Activated CD4-positive, alpha-beta T cell treated with anti-CD3 and anti-CD28 coated beads for 36 hours (primary cell): ENCODE measurements at regions of chr10 and their contacts with region 1.

Region 1: GRCh38 chr10:30330497-30331168 is 18.4 kb downstream of the MTPAP start:
- DNase-seq: no peak
- ATAC-seq: no peak
- H3K4me3 Mint-ChIP-seq: no peak overlapping the region
- H3K27ac Mint-ChIP-seq: no peak overlapping the region
- H3K4me1 Mint-ChIP-seq: no peaks in the 10 kb centered on the region
- H3K27me3 Mint-ChIP-seq: no peaks in the 10 kb centered on the region

Region 2: GRCh38 chr10:30284865-30285594 is 45.6 kb before region 1 on chr10:
- CTCF ChIA-PET with region 1: no interaction called
- POLR2A ChIA-PET with region 1: no interaction called
- intact Hi-C with region 1: no loop called
- DNase-seq: peak; percentile 6
- ATAC-seq: peak; percentile 23
- H3K4me3 Mint-ChIP-seq: no peak overlapping the region
- H3K27ac Mint-ChIP-seq: no peak overlapping the region
- H3K4me1 Mint-ChIP-seq: no peaks in the 10 kb centered on the region
- H3K27me3 Mint-ChIP-seq: peaks cover 2% of the 10 kb centered on the region

Region 3: GRCh38 chr10:30309401-30309800 is 21.2 kb before region 1 on chr10:
- CTCF ChIA-PET with region 1: no interaction called
- POLR2A ChIA-PET with region 1: no interaction called
- intact Hi-C with region 1: loop called in 1 of 2 experiments (anchors 2 kb)
- DNase-seq: no peak
- ATAC-seq: no peak
- H3K4me3 Mint-ChIP-seq: no peak overlapping the region
- H3K27ac Mint-ChIP-seq: no peak overlapping the region
- H3K4me1 Mint-ChIP-seq: no peaks in the 10 kb centered on the region
- H3K27me3 Mint-ChIP-seq: no peaks in the 10 kb centered on the region